CD4-positive, alpha-beta T cell (primary cell): ENCODE measurements at regions of chr3 and their contacts with region 1.

Region 1: GRCh38 chr3:150408221-150409102 is at the start of gene TSC22D2:
- DNase-seq: peak; percentile 93 to 99 (median 97)
- ATAC-seq: peak; percentile 69
- H3K4me3 ChIP-seq: peak within 1 kb of the TSS; percentile 93
- H3K4me3 Mint-ChIP-seq: peak within 1 kb of the TSS; percentile 100
- H3K27ac ChIP-seq: peak within 1 kb of the TSS; percentile 93 to 98
- H3K27ac Mint-ChIP-seq: peak within 1 kb of the TSS; percentile 94
- H3K4me1 ChIP-seq: peaks cover 5% of the 10 kb centered on the region
- H3K4me1 Mint-ChIP-seq: peaks cover 42% of the 10 kb centered on the region
- H3K27me3 ChIP-seq: no peaks in the 10 kb centered on the region
- H3K27me3 Mint-ChIP-seq: no peaks in the 10 kb centered on the region
- CTCF ChIP-seq: no peak
- total RNA-seq, gene TSC22D2: 47.3 to 49.3 TPM

Region 2: DNA sequence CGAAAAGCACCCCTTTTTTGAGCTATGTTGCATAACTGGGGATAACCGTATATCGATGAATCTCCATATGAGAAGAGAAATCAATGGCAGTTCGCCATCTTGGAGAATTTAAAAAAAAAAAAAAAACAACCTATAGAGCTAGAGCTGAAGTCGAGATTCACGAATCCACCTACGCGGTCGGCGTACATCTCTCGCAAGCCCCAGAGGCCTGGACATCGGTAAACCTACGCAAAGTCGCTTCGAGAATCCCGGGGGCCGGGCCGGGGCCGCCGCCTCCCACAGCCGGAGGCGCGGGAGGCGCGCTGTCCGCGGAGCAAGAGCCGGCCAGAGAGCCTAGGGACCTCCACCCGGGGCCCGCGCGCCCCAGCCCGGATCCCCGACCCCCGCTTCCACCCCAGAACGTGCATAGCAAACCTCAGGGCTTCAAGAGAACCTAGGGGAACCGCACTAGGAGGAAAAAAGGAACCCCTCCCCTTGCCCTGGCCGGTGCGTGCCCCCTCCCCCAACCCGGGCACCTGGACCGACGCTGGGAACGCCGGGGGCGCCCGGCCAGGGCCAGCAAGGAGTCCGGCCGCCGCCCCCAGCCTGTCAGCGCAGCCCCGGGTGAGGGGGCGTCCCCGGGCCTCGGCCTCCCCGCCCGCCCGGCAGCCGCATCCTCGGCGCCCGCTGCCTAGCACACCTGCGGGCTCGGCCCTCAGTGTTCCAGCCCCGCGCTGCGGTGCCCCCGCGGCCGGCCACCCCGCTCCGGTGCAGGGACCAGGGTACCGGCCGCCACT is 438.3 kb before region 1 on chr3:
- CTCF ChIA-PET with region 1: no interaction called
- POLR2A ChIA-PET with region 1: interaction called, 13 read pairs
- intact Hi-C with region 1: loop called in 1 of 2 experiments (anchors 5 kb)
- DNase-seq: peak; percentile 66 to 90 (median 74)
- ATAC-seq: peak; percentile 55
- H3K4me3 ChIP-seq: peak overlapping the region; percentile 53
- H3K4me3 Mint-ChIP-seq: peak overlapping the region; percentile 94
- H3K27ac ChIP-seq: no peak overlapping the region
- H3K27ac Mint-ChIP-seq: peak overlapping the region; percentile 57
- H3K4me1 ChIP-seq: peaks cover 13% of the 10 kb centered on the region
- H3K4me1 Mint-ChIP-seq: peaks cover 27% of the 10 kb centered on the region
- H3K27me3 ChIP-seq: peaks cover 3 to 20% of the 10 kb centered on the region in 2 experiments
- H3K27me3 Mint-ChIP-seq: peaks cover 36% of the 10 kb centered on the region
- CTCF ChIP-seq: no peak

Region 3: DNA sequence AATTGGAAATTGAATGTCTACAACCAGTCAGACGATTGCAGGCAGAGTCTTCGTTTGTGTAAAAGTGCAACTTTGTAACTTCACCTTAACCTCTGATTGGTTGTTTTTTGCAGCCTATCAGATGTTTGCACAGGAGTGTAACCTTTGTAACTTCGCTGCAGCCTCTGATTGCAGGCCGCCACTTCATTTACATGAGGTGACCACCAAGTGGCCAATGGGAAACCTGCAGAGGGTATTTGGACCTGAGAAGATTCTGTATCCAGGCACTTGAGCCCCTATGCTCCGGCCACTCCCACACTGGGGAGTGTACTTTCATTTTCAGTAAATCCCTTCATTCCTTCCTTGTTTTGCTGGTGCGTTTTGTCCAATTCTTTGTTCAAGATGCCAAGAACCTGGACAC is 369.6 kb before region 1 on chr3:
- CTCF ChIA-PET with region 1: no interaction called
- POLR2A ChIA-PET with region 1: no interaction called
- intact Hi-C with region 1: no loop called
- DNase-seq: no peak
- ATAC-seq: no peak
- H3K4me3 ChIP-seq: no peak overlapping the region
- H3K4me3 Mint-ChIP-seq: no peak overlapping the region
- H3K27ac ChIP-seq: no peak overlapping the region
- H3K27ac Mint-ChIP-seq: no peak overlapping the region
- H3K4me1 ChIP-seq: no peaks in the 10 kb centered on the region
- H3K4me1 Mint-ChIP-seq: no peaks in the 10 kb centered on the region
- H3K27me3 ChIP-seq: no peaks in the 10 kb centered on the region
- H3K27me3 Mint-ChIP-seq: peaks cover 25% of the 10 kb centered on the region
- CTCF ChIP-seq: no peak

Region 4: GRCh38 chr3:150384296-150385212 is 23.9 kb before region 1 on chr3:
- CTCF ChIA-PET with region 1: interaction called, 5 read pairs
- POLR2A ChIA-PET with region 1: interaction called, 29 read pairs
- intact Hi-C with region 1: loop called in 1 of 2 experiments (anchors 2 kb)
- DNase-seq: peak; percentile 2 to 85 (median 18)
- ATAC-seq: peak; percentile 99
- H3K4me3 ChIP-seq: peak overlapping the region; percentile 37
- H3K4me3 Mint-ChIP-seq: peak overlapping the region; percentile 17
- H3K27ac ChIP-seq: peak overlapping the region in 1 of 2 donors; percentile 16
- H3K27ac Mint-ChIP-seq: no peak overlapping the region
- H3K4me1 ChIP-seq: peaks cover 18% of the 10 kb centered on the region
- H3K4me1 Mint-ChIP-seq: peaks cover 20% of the 10 kb centered on the region
- H3K27me3 ChIP-seq: no peaks in the 10 kb centered on the region
- H3K27me3 Mint-ChIP-seq: no peaks in the 10 kb centered on the region
- CTCF ChIP-seq: peak; percentile 74

Region 5: DNA sequence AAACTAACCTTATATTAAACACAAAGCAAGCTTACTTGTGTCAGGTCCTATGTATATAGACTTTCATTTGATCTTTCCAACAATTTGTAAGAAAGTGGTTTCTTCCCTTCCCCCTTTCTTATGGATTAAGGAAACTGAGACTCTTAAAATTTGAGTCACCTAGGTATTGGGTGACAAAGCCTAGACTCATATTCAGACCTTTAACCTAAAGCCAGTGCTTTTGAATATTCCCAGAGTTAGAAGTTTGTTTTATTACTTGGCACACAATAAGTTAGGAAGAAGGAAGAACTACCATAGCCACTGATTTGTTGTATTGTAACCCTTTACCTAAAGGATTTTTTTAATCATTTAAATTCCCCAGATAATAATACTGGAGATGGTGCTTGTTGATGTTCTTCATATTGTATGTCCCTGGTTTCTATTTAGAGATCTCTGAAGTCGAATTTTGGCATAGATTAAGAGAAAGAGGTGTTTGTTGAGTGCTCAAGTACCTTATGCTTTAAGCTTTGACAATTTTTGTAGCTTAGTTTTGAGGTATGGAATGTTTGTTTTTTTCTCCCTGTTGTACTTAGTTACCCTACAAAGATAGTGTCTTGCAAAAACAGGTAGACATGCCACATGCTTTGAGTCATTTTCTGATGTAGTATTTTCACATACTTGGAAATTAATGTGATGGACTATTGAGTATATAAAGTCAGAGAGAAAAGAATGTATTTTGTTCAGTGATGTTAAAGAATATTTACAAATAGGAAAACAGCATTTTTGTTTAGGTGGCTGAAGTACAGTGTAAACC is 10.8 kb after region 1 on chr3:
- CTCF ChIA-PET with region 1: interaction called, 3 read pairs
- POLR2A ChIA-PET with region 1: interaction called, 18 read pairs
- intact Hi-C with region 1: no loop called
- DNase-seq: no peak
- ATAC-seq: no peak
- H3K4me3 ChIP-seq: no peak overlapping the region
- H3K4me3 Mint-ChIP-seq: peak overlapping the region; percentile 22
- H3K27ac ChIP-seq: no peak overlapping the region
- H3K27ac Mint-ChIP-seq: no peak overlapping the region
- H3K4me1 ChIP-seq: peaks cover 5% of the 10 kb centered on the region
- H3K4me1 Mint-ChIP-seq: peaks cover 84% of the 10 kb centered on the region
- H3K27me3 ChIP-seq: no peaks in the 10 kb centered on the region
- H3K27me3 Mint-ChIP-seq: no peaks in the 10 kb centered on the region
- CTCF ChIP-seq: no peak

Region 6: DNA sequence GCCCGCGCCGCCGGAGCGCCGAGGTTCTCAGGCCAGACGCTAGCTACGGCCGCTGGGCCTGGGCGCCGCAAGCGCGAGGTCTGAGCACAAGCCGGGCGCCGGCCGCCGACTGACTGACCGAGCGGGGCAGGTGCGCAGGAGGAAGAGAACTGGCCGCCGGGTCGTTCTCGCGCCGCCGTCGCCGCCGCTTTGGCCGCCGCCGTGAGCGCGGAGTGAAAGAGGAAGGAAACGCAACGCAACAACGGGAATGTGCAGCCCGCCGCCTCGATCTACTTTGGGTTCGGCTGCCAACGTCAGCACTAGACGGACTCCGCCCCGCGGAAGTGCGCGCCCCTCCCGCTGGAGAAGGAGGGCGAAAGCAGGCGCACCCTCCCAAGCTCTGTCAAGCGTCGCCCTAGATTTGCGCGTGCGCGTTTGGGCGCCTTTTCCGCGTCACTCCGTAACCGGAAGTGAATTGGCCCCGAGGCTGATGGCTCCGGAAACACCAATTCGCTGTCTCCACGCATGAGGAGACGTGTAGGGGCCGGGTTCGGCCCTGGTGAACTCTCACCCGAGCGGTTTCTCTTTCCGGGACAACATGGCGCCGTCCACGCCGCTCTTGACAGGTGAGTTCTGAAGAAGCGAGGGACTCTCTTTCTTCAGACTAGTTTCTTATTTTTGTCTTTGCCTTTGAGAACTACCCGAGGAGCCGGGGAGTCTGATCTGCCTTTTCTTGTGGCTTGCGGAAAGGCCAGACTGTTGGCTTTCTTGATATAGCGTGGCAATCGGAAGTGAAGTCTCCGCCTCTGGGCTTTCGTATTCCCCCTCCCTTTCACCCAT is 138.0 kb after region 1 on chr3 and contains the starts of genes EIF2A and SERP1:
- CTCF ChIA-PET with region 1: interaction called, 7 read pairs
- POLR2A ChIA-PET with region 1: interaction called, 98 read pairs
- intact Hi-C with region 1: loop called (anchors 1 kb)
- DNase-seq: peak; percentile 98 to 100 (median 99)
- ATAC-seq: peak; percentile 88
- H3K4me3 ChIP-seq: peak within 1 kb of the TSS; percentile 86
- H3K4me3 Mint-ChIP-seq: peak within 1 kb of the TSS; percentile 91
- H3K27ac ChIP-seq: peak within 1 kb of the TSS; percentile 98 to 99
- H3K27ac Mint-ChIP-seq: peak within 1 kb of the TSS; percentile 93
- H3K4me1 ChIP-seq: peaks cover 19% of the 10 kb centered on the region
- H3K4me1 Mint-ChIP-seq: peaks cover 73% of the 10 kb centered on the region
- H3K27me3 ChIP-seq: no peaks in the 10 kb centered on the region
- H3K27me3 Mint-ChIP-seq: no peaks in the 10 kb centered on the region
- CTCF ChIP-seq: no peak
- total RNA-seq, gene EIF2A: 115 to 122 TPM
- total RNA-seq, gene SERP1: 141 to 147 TPM

Region 7: GRCh38 chr3:150763122-150763841 is 354.8 kb after region 1 on chr3 and contains the start of gene SIAH2:
- CTCF ChIA-PET with region 1: interaction called, 4 read pairs
- POLR2A ChIA-PET with region 1: interaction called, 87 read pairs
- intact Hi-C with region 1: loop called (anchors 2 to 5 kb)
- DNase-seq: peak; percentile 83 to 98 (median 90)
- ATAC-seq: peak; percentile 82
- H3K4me3 ChIP-seq: peak within 1 kb of the TSS; percentile 91
- H3K4me3 Mint-ChIP-seq: peak within 1 kb of the TSS; percentile 100
- H3K27ac ChIP-seq: peak within 1 kb of the TSS; percentile 98 to 99
- H3K27ac Mint-ChIP-seq: peak within 1 kb of the TSS; percentile 100
- H3K4me1 ChIP-seq: peaks cover 33% of the 10 kb centered on the region
- H3K4me1 Mint-ChIP-seq: peaks cover 47% of the 10 kb centered on the region
- H3K27me3 ChIP-seq: no peaks in the 10 kb centered on the region
- H3K27me3 Mint-ChIP-seq: no peaks in the 10 kb centered on the region
- CTCF ChIP-seq: no peak
- total RNA-seq, gene SIAH2: 73.7 to 76.1 TPM